ENCODE measurements at regions of chr15 and their contacts with region 1.

Region 1: DNA sequence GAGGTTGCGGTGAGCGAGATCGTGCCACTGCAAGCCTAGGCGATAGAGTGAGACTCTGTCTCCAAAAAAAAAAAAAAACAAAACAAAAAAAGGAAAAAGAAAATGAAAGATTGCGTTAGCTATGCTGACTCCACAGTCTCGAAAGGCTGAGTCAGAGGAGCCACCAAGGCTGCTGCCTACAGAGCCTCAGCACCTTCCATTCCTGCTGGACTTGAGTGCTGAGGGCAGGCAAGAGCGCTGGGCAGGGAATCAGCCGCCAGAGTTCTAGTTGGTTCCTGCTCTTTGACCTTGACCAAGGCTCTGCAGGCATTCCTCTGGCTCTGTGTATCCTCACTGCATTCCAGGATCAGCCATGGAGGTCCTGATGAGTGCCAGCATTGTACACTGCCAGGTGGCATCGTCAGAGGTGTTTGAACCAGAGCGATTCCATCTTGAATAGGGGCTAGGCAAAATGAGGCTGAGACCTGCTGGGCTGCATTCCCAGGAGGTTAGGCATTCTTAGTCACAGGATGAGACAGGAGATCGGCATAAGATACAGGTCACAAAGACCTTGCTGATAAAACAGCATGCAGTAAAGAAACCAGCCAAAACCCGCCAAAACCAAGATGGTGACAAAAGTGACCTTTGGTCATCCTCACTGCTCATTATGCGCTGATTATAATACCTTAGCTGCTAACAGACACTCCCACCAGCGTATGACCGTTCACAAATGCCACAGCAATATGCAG is 5.9 kb downstream of the MESP2 start:
- DNase-seq: no peak
- ATAC-seq: peak; percentile 74
- H3K4me3 Mint-ChIP-seq: peak overlapping the region; percentile 33
- H3K27ac Mint-ChIP-seq: peak overlapping the region; percentile 76
- H3K4me1 Mint-ChIP-seq: peaks cover 39% of the 10 kb centered on the region
- H3K27me3 Mint-ChIP-seq: no peaks in the 10 kb centered on the region
- CTCF ChIP-seq: no peak

Region 2: DNA sequence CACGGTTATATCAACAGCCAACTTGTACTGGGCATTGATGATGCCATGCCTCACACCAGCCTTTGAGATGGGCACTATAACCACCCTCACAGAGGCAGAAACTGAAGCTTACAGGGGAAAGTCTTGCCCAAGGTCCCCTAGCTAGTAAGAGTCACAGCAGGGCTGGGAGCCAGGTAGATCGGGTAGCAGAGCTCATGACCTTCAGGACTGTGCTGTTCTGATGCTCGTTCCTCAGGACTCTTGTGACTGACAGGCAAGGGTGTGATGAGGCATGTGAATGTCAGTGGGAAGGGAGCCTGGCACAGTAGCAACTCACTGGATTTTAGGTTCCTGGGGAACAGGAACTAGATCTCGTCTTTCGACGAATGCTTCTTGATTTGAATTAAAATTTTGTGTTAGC is 626.4 kb before region 1 on chr15:
- CTCF ChIA-PET with region 1: no interaction called
- POLR2A ChIA-PET with region 1: interaction called, 10 read pairs
- intact Hi-C with region 1: no loop called
- DNase-seq: no peak
- ATAC-seq: no peak
- H3K4me3 Mint-ChIP-seq: no peak overlapping the region
- H3K27ac Mint-ChIP-seq: no peak overlapping the region
- H3K4me1 Mint-ChIP-seq: no peaks in the 10 kb centered on the region
- H3K27me3 Mint-ChIP-seq: no peaks in the 10 kb centered on the region
- CTCF ChIP-seq: no peak

Region 3: DNA sequence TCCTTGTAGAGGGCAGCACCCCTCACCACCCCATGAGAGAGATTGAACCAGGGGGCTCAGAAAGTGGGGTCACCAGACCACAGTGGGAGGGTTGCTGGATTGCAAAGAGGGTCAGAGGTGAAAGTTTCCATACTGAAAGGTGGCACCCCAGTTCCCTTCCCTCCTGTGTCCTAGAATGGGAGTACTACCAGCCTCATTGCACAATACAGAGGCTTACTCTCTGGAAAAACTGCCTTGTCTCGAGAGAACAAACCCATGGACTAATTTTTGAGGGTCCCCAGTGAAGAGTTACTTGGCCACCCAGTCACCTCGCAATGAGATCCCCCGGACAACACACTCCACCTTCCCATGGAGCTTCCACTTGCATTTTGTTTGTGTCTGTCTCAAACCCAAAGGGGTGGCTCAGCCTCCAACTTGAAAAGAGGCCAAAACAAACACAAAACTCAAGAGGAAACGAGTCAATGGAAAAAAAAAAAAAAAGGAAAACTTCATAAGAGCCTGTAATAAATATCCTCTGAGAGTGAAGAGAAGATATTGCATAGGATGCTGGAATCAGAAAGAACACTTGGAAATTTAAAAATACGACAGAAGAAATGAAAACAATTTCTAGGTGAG is 12.7 kb after region 1 on chr15:
- CTCF ChIA-PET with region 1: no interaction called
- POLR2A ChIA-PET with region 1: no interaction called
- intact Hi-C with region 1: no loop called
- DNase-seq: no peak
- ATAC-seq: no peak
- H3K4me3 Mint-ChIP-seq: no peak overlapping the region
- H3K27ac Mint-ChIP-seq: no peak overlapping the region
- H3K4me1 Mint-ChIP-seq: peaks cover 9% of the 10 kb centered on the region
- H3K27me3 Mint-ChIP-seq: no peaks in the 10 kb centered on the region
- CTCF ChIP-seq: no peak

Region 4: GRCh38 chr15:89851673-89852341 is 69.8 kb after region 1 on chr15:
- CTCF ChIA-PET with region 1: no interaction called
- POLR2A ChIA-PET with region 1: interaction called, 6 read pairs
- intact Hi-C with region 1: loop called (anchors 2 kb)
- DNase-seq: no peak
- ATAC-seq: peak; percentile 72
- H3K4me3 Mint-ChIP-seq: peak overlapping the region; percentile 16
- H3K27ac Mint-ChIP-seq: peak overlapping the region; percentile 93
- H3K4me1 Mint-ChIP-seq: peaks cover 48% of the 10 kb centered on the region
- H3K27me3 Mint-ChIP-seq: no peaks in the 10 kb centered on the region
- CTCF ChIP-seq: no peak

Region 5: DNA sequence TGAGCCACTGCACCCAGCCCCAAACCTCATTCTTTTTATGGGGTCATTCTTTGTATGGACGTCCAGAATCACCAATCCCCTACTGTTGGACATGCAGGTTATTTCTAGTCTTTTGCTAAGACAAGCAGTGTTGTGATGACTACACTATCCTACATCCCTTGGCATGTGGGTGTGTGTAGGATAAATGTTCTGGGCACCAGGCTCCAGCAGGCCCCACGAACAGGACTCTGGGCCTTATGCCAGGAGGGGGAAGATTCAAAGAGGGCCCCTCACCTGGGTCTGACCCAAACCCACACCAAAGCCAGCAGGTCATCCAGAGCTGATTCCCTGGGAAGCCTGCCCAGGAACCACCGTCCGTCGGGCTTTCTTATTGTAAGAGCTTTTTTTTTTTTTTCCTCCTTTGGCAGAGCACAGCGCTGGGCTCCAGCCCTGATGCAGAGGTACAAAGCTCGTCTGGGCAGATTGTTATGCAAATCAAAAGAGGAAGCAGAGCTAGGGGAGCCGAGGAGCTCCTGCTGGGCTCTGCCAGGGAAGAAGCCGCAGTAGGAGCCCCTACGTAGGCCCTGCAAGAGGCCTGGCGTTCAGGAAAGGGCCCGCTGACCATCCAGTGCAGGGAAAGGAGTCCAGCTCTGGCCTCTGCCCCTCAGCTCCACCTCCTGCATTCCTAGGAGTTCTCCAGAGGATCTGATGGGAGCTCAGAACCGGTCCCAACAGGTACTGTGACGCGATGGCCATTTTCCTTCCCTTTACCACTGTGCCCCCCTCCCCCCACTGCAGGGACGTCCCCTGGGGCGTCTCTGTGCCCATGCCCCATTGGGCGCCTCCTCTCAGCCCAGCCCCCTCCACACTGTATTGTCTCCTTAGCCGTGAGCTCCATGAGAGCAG is 1057.4 kb after region 1 on chr15:
- CTCF ChIA-PET with region 1: no interaction called
- POLR2A ChIA-PET with region 1: no interaction called
- intact Hi-C with region 1: no loop called
- DNase-seq: no peak
- ATAC-seq: peak; percentile 62
- H3K4me3 Mint-ChIP-seq: peak overlapping the region; percentile 55
- H3K27ac Mint-ChIP-seq: no peak overlapping the region
- H3K4me1 Mint-ChIP-seq: peaks cover 45% of the 10 kb centered on the region
- H3K27me3 Mint-ChIP-seq: no peaks in the 10 kb centered on the region
- CTCF ChIP-seq: no peak

Measured in activated B cell treated with CpG ODN at 0.5 μM for 24 hours (primary cell).